Gastrocnemius medialis (tissue), 4 donors: ENCODE measurements at regions of chr17 and their contacts with region 1.

Region 1: DNA sequence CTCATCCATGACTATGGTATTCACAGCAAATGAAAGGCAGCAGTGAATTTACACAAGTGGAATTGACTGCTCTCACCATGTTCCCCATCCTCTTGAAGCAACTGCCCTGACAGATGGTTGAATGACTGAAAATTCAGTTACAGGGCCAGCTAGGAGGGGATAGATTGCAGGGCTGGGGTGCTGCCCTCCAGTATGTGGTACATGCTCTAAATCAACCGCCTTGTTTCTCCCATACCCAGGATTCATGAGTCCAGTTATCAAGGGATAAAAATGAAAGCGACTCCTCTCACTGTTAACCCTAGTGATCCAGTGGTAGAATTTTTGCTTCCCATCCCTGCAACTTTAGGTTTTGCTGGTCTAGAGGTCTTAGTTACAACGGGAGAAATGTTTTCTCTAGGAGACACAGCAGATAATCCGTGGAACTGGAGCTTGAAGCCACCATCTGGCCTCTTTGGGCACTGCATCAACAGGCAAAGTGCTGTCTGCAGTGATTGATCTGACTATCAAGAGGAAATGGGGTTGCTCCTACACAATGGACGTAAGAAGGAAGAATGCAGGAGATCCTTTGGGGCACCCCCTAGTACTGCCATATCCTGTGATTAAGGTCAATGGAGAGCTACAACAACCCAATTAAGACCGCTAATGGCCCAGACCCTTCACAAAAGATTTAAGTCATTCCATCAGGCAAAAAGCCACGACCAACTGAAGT is 32.0 kb downstream of the SCPEP1 start:
- DNase-seq: peak; percentile 25
- ATAC-seq: peak; percentile 60 to 67
- H3K4me3 ChIP-seq: no peak overlapping the region
- H3K27ac ChIP-seq: no peak overlapping the region
- H3K4me1 ChIP-seq: no peaks in the 10 kb centered on the region
- H3K27me3 ChIP-seq: no peaks in the 10 kb centered on the region
- CTCF ChIP-seq: peak; percentile 25 to 71 (median 53)
- POLR2A ChIP-seq: no peak

Region 2: GRCh38 chr17:56913864-56914640 is 95.8 kb before region 1 on chr17 and contains the start of gene TRIM25:
- in situ Hi-C with region 1: no loop called
- intact Hi-C with region 1: no loop called
- DNase-seq: peak; percentile 92 to 93
- ATAC-seq: peak; percentile 78 to 84
- H3K4me3 ChIP-seq: peak within 1 kb of the TSS; percentile 68 to 87 (median 74)
- H3K27ac ChIP-seq: peak within 1 kb of the TSS; percentile 85 to 95 (median 87)
- H3K4me1 ChIP-seq: peaks cover 53 to 54% of the 10 kb centered on the region in 2 donors
- H3K27me3 ChIP-seq: no peaks in the 10 kb centered on the region
- CTCF ChIP-seq: no peak
- POLR2A ChIP-seq: peak; percentile 98 to 99
- total RNA-seq, gene TRIM25: 8.5 to 18.2 (median 15.1) TPM

Region 3: DNA sequence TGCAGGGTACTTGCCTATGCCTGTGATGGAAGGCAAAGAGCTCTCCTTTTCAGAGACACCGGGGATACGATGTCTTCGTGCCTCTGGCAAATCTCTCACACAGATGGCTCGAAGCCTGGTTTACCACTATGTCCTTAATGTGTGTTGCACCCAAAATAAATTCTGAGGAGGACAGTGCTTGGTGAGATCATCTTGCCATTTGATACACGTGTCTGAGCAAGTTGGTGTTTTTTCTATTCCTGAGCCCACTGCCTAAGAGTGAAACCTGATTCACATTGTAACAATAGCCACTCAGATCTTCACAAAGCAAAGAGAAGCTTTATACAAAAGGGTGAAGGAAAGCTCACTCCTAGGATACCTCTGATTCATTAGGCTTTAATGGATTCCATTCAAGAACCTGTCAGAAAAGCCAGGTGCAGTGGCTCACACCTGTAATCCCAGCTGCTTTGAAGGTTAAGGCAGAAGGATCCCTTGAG is 42.0 kb after region 1 on chr17:
- in situ Hi-C with region 1: loop called in 1 of 4 experiments (anchors 5 kb)
- intact Hi-C with region 1: loop called (anchors 2 kb)
- DNase-seq: peak; percentile 76 to 79
- ATAC-seq: peak; percentile 91 to 96
- H3K4me3 ChIP-seq: no peak overlapping the region
- H3K27ac ChIP-seq: peak overlapping the region; percentile 72 to 88 (median 84)
- H3K4me1 ChIP-seq: peaks cover 19 to 35% of the 10 kb centered on the region in 2 donors
- H3K27me3 ChIP-seq: no peaks in the 10 kb centered on the region
- CTCF ChIP-seq: no peak
- POLR2A ChIP-seq: peak in 1 of 2 donors; percentile 46

Region 4: DNA sequence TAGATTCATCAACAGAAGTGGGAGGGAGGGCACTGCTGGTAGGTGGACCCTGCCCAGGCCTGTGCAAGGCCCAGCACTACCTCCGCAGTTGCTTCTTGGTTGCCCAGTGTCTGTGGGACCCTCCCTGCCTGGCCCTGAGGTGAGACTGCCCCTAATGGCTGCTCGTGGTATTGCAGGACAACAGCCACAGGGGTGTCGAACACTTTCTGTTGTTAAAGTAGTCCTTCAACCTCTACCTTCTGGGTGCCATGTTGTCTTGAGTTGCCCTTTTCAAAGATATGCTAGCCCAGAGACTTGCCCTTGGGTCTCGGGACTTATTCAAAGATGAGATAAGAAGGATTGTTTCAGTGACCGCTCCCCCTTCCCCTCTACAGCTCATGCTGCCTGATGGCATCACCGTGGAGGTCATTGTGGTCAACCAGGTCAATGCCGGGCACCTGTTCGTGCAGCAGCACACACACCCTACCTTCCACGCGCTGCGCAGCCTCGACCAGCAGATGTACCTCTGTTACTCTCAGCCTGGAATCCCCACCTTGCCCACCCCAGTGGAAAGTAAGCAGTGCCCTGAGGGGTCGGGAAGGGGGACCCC is 104.3 kb after region 1 on chr17:
- in situ Hi-C with region 1: no loop called
- intact Hi-C with region 1: loop called (anchors 10 kb)
- DNase-seq: no peak
- ATAC-seq: no peak
- H3K4me3 ChIP-seq: no peak overlapping the region
- H3K27ac ChIP-seq: peak overlapping the region; percentile 35 to 59 (median 50)
- H3K4me1 ChIP-seq: peaks cover 26 to 33% of the 10 kb centered on the region in 2 donors
- H3K27me3 ChIP-seq: no peaks in the 10 kb centered on the region
- CTCF ChIP-seq: peak; percentile 68 to 86 (median 81)
- POLR2A ChIP-seq: no peak

Region 5: GRCh38 chr17:57370037-57370581 is 360.2 kb after region 1 on chr17:
- in situ Hi-C with region 1: no loop called
- intact Hi-C with region 1: no loop called
- DNase-seq: no peak
- ATAC-seq: peak in 1 of 2 donors; percentile 25
- H3K4me3 ChIP-seq: no peak overlapping the region
- H3K27ac ChIP-seq: peak overlapping the region; percentile 85 to 90 (median 88)
- H3K4me1 ChIP-seq: peaks cover 57 to 60% of the 10 kb centered on the region in 2 donors
- H3K27me3 ChIP-seq: no peaks in the 10 kb centered on the region
- CTCF ChIP-seq: no peak
- POLR2A ChIP-seq: no peak